ENCODE measurements at regions of chr5 and their contacts with region 1.

Region 1: DNA sequence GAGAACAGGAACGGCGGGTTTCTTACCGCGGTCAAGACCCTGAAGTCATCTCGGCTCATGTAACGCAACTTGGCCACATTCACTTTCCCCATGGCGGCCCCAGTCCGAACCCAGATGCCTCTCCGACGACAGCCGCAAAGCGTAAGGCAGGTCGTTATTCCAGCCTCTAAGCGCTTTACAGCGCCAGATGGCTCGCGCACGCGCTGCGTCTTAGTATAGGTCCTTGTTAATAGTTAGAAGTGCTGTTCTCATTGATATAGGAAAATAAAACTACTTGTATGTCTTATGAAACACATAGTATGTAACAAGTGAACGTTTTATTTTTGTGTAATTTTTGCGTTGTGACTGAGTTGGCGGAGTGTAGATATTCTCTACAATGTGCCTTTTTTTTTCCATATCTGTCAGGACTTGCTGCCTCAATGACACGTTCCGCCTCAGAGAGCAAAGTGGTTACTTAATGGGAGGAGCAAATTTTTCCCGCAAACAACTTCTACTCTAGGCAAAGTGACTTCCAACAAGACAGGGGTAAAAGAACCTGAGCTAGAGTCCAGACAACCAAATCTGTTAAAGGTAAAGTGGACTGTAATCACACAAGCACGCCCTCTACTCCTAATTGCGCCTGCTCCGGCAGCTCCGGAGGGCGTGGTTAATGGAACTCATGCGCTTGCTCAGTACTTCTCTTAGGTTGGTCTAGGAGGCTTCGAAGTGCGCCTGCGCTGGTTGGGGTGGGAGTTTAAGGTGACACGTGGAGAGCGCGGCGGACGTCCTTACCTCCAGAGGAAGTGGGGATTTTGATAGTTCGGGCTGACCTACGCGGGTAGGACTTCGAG is at the start of gene RIOK2:
- DNase-seq: peak; percentile 98
- H3K4me3 ChIP-seq: peak within 1 kb of the TSS; percentile 96
- H3K27ac ChIP-seq: peak within 1 kb of the TSS; percentile 88
- H3K4me1 ChIP-seq: peaks cover 27% of the 10 kb centered on the region
- CTCF ChIP-seq: peak; percentile 19; the same call in 1 of the 2 replicates
- total RNA-seq, gene RIOK2: 21.9 and 44.7 TPM in 2 replicates

Region 2: DNA sequence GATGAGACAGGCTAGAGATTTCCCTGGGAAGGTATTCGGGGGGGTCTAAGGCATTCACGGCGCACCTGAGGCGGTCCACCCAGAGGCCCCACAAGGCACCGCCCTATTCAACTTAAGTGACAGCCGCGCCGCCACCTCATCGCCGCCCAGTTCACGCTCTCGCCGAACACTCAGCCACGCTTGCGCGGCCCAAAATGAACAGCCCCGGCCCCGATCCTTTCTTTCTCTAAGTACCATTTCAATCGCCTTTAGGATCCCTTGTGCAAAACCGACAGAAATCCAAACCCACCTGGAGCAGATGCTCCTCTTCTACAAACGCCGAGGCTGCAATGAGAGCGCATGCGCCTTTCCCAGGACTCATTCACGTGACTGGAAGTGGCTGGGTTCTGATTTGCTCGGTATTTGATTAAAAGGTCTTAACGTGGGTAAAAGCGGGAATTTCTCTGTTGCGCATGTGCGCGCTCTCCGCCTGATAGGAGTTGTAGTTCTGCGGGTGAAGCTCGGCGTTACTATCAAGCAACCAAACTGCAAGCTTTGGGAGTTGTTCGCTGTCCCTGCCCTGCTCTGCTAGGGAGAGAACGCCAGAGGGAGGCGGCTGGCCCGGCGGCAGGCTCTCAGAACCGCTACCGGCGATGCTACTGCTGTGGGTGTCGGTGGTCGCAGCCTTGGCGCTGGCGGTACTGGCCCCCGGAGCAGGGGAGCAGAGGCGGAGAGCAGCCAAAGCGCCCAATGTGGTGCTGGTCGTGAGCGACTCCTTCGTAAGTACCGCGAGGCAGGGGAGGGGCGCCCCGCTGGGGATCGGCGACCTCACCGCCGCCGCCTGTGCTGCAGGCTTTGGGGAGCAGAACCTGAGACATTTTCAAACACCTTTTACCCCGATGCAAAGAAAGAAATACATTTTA is 1628.4 kb before region 1 on chr5 and contains the starts of genes ARSK and SKIC3:
- CTCF ChIA-PET with region 1: no interaction called
- POLR2A ChIA-PET with region 1: no interaction called
- intact Hi-C with region 1: loop called (anchors 5 kb)
- DNase-seq: peak; percentile 99
- H3K4me3 ChIP-seq: peak within 1 kb of the TSS; percentile 81
- H3K27ac ChIP-seq: peak within 1 kb of the TSS; percentile 71
- H3K4me1 ChIP-seq: peaks cover 15% of the 10 kb centered on the region
- CTCF ChIP-seq: 0 out of 2 replicates have a peak, but pooled peaks have one; percentile 30
- total RNA-seq, gene ARSK: 4.1 and 5.9 TPM in 2 replicates
- total RNA-seq, gene SKIC3: 53.0 and 55.4 TPM in 2 replicates

Region 3: GRCh38 chr5:96662725-96663513 is 520.4 kb before region 1 on chr5:
- CTCF ChIA-PET with region 1: no interaction called
- POLR2A ChIA-PET with region 1: no interaction called
- intact Hi-C with region 1: loop called (anchors 1 kb)
- DNase-seq: peak; percentile 89
- H3K4me3 ChIP-seq: peak overlapping the region; percentile 80
- H3K27ac ChIP-seq: peak overlapping the region; percentile 88
- H3K4me1 ChIP-seq: peaks cover 23% of the 10 kb centered on the region
- CTCF ChIP-seq: no peak

Region 4: GRCh38 chr5:97149709-97150108 is 33.6 kb before region 1 on chr5:
- CTCF ChIA-PET with region 1: no interaction called
- POLR2A ChIA-PET with region 1: no interaction called
- intact Hi-C with region 1: no loop called
- DNase-seq: no peak
- H3K4me3 ChIP-seq: no peak overlapping the region
- H3K27ac ChIP-seq: no peak overlapping the region
- H3K4me1 ChIP-seq: no peaks in the 10 kb centered on the region
- CTCF ChIP-seq: no peak

Region 5: GRCh38 chr5:97167435-97167834 is 15.9 kb before region 1 on chr5:
- CTCF ChIA-PET with region 1: no interaction called
- POLR2A ChIA-PET with region 1: interaction called, 16 read pairs
- intact Hi-C with region 1: no loop called
- DNase-seq: peak; percentile 32
- H3K4me3 ChIP-seq: no peak overlapping the region
- H3K27ac ChIP-seq: peak overlapping the region; percentile 59
- H3K4me1 ChIP-seq: peaks cover 13% of the 10 kb centered on the region
- CTCF ChIP-seq: no peak

Region 6: DNA sequence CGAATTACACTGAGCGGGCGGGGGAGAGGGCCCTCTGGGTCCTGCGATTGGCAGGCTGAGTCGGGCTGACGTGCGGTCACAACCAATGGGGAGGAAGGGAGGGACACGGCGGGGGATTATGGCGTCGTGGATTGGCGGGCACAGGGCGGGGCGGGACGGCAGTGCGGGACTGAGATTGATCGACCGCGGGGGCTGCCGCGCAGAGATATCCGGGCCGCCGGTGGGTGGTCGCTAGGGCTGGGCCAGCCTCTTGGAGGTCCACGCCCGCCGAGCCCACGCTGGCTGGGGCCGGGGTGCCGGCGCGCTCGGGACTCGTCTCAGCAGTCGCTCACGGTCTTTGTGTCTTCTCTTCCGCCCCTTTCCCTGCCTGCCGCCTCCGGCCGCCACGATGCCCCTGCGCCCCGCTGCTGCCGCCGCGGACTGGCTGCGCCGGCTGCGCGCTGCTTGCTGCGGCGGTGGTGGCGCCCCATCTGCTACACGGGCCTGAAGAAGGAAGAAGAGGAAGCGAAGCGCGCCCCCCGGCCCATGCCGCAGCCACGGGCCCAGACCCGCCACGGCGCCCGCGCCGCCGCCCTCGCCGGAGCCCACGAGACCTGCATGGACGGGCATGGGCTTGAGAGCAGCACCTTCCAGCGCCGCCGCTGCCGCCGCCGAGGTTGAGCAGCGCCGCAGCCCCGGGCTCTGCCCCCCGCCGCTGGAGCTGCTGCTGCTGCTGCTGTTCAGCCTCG is 1590.3 kb after region 1 on chr5 and contains the start of gene RGMB:
- CTCF ChIA-PET with region 1: no interaction called
- POLR2A ChIA-PET with region 1: no interaction called
- intact Hi-C with region 1: loop called (anchors 10 kb)
- DNase-seq: peak; percentile 95
- H3K4me3 ChIP-seq: peak within 1 kb of the TSS; percentile 90
- H3K27ac ChIP-seq: peak within 1 kb of the TSS; percentile 56
- H3K4me1 ChIP-seq: peaks cover 40% of the 10 kb centered on the region
- CTCF ChIP-seq: peak; percentile 31; the same call in 1 of the 2 replicates
- total RNA-seq, gene RGMB: 9.2 and 9.3 TPM in 2 replicates

Region 7: DNA sequence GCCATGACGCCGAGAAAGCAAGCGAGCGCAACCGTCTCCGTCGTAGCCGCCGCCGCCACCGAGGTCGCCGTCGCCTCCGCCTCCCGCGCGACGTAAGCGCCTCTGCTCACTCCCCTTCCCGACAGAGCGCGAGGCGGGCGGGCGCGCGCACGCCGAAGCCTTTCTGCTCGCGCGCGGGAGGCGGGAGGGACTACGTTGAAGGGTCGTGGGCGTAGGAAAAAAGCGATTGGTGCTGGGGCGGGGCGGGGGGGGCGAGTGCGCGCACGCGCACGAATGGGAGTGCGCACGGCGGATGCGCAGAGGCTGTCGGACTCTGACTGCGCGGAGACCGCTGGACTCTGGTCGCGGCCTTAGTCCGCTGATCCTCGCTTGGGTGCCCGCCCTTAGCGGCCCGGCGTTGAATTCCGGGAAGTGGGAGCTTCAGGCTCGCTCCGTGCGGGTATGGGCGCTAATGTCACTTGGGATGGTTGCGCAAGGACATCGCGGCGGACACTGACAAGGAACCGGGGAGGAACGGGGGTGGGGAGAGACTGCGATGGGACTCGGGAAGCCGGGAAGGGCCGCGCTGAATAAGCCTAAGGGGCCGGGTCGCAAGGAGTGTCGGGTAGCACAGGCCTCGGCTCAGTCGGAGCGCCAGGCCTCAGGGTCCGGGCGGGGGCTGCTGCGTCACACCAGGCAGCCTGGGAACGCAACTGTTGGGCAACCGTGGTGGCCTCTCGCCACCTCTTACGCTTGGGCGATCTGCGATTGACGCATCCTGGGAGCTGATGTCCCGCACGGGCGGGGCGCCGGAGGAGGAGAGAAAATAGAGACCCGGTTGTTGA is 1745.8 kb after region 1 on chr5 and contains the start of gene CHD1:
- CTCF ChIA-PET with region 1: no interaction called
- POLR2A ChIA-PET with region 1: no interaction called
- intact Hi-C with region 1: loop called (anchors 2 kb)
- DNase-seq: peak; percentile 94
- H3K4me3 ChIP-seq: peak within 1 kb of the TSS; percentile 76
- H3K27ac ChIP-seq: no peak within 1 kb of the TSS
- H3K4me1 ChIP-seq: peaks cover 4% of the 10 kb centered on the region
- CTCF ChIP-seq: no peak
- total RNA-seq, gene CHD1: 10.3 and 23.3 TPM in 2 replicates

Measured in OCI-LY7 (cell line).